ENCODE measurements at regions of chr4 and their contacts with region 1.

Region 1: GRCh38 chr4:10237131-10237530 is 120.5 kb upstream of the WDR1 start:
- DNase-seq: no peak
- ATAC-seq: no peak
- H3K4me3 ChIP-seq: no peak overlapping the region
- H3K4me3 Mint-ChIP-seq: no peak overlapping the region
- H3K27ac ChIP-seq: no peak overlapping the region
- H3K27ac Mint-ChIP-seq: no peak overlapping the region
- H3K4me1 ChIP-seq: no peaks in the 10 kb centered on the region
- H3K4me1 Mint-ChIP-seq: no peaks in the 10 kb centered on the region
- H3K27me3 ChIP-seq: no peaks in the 10 kb centered on the region
- H3K27me3 Mint-ChIP-seq: peaks cover 0 to 19% of the 10 kb centered on the region in 2 donors
- CTCF ChIP-seq: no peak

Region 2: GRCh38 chr4:10204401-10205058 is 32.6 kb before region 1 on chr4:
- intact Hi-C with region 1: loop called (anchors 1 kb)
- DNase-seq: no peak
- ATAC-seq: no peak
- H3K4me3 ChIP-seq: no peak overlapping the region
- H3K4me3 Mint-ChIP-seq: no peak overlapping the region
- H3K27ac ChIP-seq: no peak overlapping the region
- H3K27ac Mint-ChIP-seq: no peak overlapping the region
- H3K4me1 ChIP-seq: no peaks in the 10 kb centered on the region
- H3K4me1 Mint-ChIP-seq: peaks cover 0 to 5% of the 10 kb centered on the region in 2 donors
- H3K27me3 ChIP-seq: no peaks in the 10 kb centered on the region
- H3K27me3 Mint-ChIP-seq: peaks cover 8 to 16% of the 10 kb centered on the region in 2 donors
- CTCF ChIP-seq: no peak

Measured in natural killer cell (primary cell).